Common myeloid progenitor, CD34-positive (primary cell): ENCODE measurements at regions of chr1 and their contacts with region 1.

Region 1: DNA sequence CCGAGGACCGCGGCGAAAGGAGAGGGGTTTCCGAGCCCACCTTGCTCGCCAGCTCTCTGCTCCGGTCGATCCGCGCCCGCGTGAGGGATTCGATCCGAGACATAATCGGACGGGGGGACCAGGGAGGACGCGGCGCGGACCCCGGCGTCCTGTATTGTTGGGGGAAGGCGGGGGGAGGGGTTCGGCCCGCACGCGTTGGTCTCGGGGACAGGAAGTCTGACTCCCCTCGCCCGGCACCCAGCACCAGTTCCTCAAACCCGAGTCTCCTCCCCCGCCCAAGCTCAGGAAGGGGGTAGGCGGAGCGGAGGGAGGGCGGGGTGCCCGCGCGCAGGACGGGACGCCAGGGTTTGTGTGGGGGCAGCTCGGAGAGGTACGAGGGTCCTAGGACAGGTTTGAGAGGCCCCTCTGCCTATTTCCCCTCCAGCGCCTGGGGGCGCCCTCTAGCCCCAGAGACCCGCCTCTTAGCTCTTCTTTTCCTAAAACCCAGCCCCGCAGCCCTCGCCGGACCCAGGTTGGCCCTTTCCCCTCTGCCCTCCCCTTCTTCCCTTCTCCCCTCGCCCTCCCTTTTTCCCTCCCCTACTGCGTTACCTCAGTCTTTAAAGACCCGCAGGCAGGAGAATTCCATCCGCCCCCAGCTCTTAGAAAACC is at the start of gene ARHGEF2:
- DNase-seq: peak; percentile 87 to 96 (median 93)
- H3K4me3 ChIP-seq: peak within 1 kb of the TSS; percentile 79 to 99 (median 92)
- H3K27ac ChIP-seq: peak within 1 kb of the TSS; percentile 87 to 95
- H3K4me1 ChIP-seq: peaks cover 44 to 87% (median 83%) of the 10 kb centered on the region in 4 experiments
- H3K27me3 ChIP-seq: no peaks in the 10 kb centered on the region

Region 2: GRCh38 chr1:155946633-155947219 is 31.7 kb before region 1 on chr1:
- CTCF ChIA-PET with region 1: interaction called, 19 read pairs
- POLR2A ChIA-PET with region 1: interaction called, 3 read pairs
- DNase-seq: no peak
- H3K4me3 ChIP-seq: peak overlapping the region in 1 of 7 experiments; percentile 25
- H3K27ac ChIP-seq: peak overlapping the region in 1 of 2 experiments; percentile 61
- H3K4me1 ChIP-seq: peaks cover 2 to 38% (median 29%) of the 10 kb centered on the region in 4 experiments
- H3K27me3 ChIP-seq: no peaks in the 10 kb centered on the region

Region 3: GRCh38 chr1:155961937-155962336 is 16.5 kb before region 1 on chr1:
- CTCF ChIA-PET with region 1: interaction called, 208 read pairs
- POLR2A ChIA-PET with region 1: interaction called, 60 read pairs
- DNase-seq: peak in 2 of 3 donors; percentile 31 to 53
- H3K4me3 ChIP-seq: no peak overlapping the region
- H3K27ac ChIP-seq: peak overlapping the region in 1 of 2 experiments; percentile 40
- H3K4me1 ChIP-seq: peaks cover 0 to 28% (median 13%) of the 10 kb centered on the region in 4 experiments
- H3K27me3 ChIP-seq: no peaks in the 10 kb centered on the region

Region 4: GRCh38 chr1:156154317-156154749 is 175.9 kb after region 1 on chr1:
- CTCF ChIA-PET with region 1: no interaction called
- POLR2A ChIA-PET with region 1: no interaction called
- DNase-seq: peak; percentile 54 to 74 (median 73)
- H3K4me3 ChIP-seq: peak overlapping the region in 5 of 7 experiments; percentile 12 to 60 (median 40)
- H3K27ac ChIP-seq: no peak overlapping the region
- H3K4me1 ChIP-seq: peaks cover 8 to 55% (median 27%) of the 10 kb centered on the region in 4 experiments
- H3K27me3 ChIP-seq: no peaks in the 10 kb centered on the region